ENCODE measurements at regions of chr17 and their contacts with region 1.

Region 1: DNA sequence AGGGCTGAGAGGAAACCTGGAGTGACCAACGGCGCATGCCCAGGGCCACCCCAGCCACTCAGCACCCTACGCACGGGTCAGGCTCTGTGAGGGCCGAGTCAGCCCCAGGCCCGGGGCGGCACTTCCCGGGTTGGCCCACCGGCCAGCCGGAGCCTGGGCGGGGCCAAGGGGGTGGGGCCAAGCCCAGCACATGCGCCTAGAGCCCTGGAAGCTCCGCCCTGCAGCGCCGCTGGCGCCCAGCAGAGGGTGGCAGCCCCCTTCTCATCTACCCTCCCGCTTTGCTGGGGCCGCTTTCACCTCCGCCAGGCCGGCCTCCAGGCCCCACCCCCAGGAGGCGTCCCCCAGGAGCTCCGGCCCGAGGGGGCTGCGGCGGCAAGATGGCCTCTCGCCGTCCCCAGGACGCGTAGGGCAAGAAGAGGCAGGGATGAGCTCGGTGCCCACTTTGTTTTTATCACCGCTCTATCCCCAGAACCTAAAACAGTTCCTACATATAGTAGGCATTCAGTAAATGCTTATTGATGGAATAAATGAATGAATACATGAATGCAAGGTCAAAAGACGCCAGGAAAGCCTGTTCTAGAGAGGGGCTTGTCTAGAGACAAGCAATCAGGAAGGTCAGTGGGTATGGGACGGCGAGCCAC is 31.3 kb downstream of the MYO18A start:
- DNase-seq: no peak
- H3K4me3 ChIP-seq: peak overlapping the region; percentile 36
- H3K27me3 ChIP-seq: no peaks in the 10 kb centered on the region
- CTCF ChIP-seq: peak; percentile 89

Region 2: GRCh38 chr17:29059281-29059680 is 89.6 kb before region 1 on chr17:
- CTCF ChIA-PET with region 1: no interaction called
- POLR2A ChIA-PET with region 1: no interaction called
- DNase-seq: no peak
- H3K4me3 ChIP-seq: no peak overlapping the region
- H3K27me3 ChIP-seq: peaks cover 21% of the 10 kb centered on the region
- CTCF ChIP-seq: no peak

Region 3: DNA sequence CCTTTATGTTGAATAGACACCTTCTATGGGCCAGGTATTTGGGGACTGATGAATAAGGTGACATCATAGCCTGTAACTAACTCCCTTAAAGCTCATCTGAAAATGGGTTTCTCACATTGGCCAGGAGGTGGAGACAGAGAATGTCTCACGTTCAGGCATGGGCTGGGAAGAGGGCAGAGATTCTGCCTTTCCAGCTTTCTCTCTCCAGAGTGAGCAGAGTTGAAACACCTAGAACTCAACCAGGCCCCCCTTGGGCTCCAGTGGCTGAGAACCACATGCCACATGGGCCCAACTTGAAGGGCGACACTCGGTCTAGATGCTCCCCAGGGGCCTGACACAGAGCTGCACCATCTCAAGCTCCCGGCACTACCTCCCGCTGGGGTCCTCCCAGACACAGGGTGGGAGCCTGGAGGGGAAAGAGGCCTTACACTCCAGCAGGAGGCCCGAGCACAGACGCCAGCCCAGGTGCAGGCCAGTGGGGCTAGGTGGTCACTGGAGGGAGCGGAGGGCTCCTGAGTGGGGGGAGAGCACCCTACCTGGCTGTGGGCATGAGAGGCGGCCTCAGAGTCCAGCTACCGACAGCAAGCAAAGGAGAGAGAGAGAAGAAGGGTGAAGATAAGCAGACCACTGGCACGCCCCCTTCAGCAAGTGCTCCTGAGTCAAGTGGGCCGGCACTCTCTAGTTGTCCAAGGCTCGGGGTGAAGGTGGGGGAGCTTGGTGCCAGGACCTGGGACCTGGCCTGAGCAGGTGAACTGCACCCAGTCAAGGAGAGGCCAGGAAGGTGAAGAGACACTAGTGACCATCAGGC is 24.6 kb before region 1 on chr17:
- CTCF ChIA-PET with region 1: interaction called, 315 read pairs
- POLR2A ChIA-PET with region 1: no interaction called
- DNase-seq: no peak
- H3K4me3 ChIP-seq: no peak overlapping the region
- H3K27me3 ChIP-seq: no peaks in the 10 kb centered on the region
- CTCF ChIP-seq: peak; percentile 79

Region 4: GRCh38 chr17:29180034-29180787 is 31.3 kb after region 1 on chr17 and contains the start of gene MYO18A:
- CTCF ChIA-PET with region 1: interaction called, 227 read pairs
- POLR2A ChIA-PET with region 1: no interaction called
- DNase-seq: no peak
- H3K4me3 ChIP-seq: peak within 1 kb of the TSS; percentile 60
- H3K27me3 ChIP-seq: no peaks in the 10 kb centered on the region
- CTCF ChIP-seq: peak; percentile 57
- polyA plus RNA-seq, gene MYO18A: 8.2 and 12.0 TPM in 2 replicates

Region 5: DNA sequence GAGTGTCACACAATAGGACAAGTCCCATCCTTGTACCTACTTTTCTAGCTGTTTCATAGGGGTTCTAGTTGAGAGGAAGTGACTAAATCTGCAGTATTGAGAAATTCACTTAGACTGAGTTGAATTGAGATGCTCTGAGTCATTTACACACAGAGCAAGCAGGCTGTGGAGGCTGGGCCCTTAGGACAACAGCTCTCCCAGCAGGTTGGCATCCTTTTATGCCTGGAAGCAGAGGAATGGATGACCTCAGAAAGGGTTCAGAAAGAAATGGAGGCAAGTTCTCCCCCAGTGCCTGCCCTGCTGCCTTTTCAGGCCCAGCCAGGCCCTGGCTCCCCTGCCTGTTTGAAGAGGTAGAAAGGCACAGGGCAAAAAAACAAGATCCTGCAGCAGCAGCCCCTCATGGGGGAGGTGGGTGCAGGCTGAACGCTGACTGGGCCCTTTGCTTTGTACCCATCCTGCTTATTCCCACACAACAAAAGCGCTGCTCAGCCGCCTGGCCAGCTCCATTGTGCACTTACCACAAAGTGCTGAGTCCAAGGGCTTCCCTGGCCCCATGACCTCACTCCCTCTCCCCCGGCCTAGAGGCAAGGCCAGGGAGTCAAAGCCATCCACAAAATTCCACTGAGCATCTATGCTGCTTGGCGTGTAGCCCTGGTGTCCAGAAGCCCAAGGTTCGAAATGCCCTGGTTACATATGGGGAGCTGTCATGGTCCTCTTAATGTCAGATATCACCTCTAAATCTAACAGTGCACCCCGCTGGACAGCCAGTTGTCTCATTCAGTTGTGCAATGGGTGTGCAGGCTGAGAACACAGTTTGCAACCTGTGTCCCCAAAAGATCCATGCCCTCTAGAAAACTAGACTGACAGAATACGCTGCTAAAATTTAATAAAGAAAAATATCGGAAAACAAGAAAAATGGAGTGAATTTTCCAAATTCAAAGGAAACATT is 92.4 kb after region 1 on chr17:
- CTCF ChIA-PET with region 1: interaction called, 11 read pairs
- POLR2A ChIA-PET with region 1: interaction called, 3 read pairs
- DNase-seq: peak; percentile 90
- H3K4me3 ChIP-seq: no peak overlapping the region
- H3K27me3 ChIP-seq: no peaks in the 10 kb centered on the region
- CTCF ChIP-seq: peak; percentile 24; the same call in 1 of the 2 replicates

Region 6: GRCh38 chr17:29292992-29293889 is 144.3 kb after region 1 on chr17:
- CTCF ChIA-PET with region 1: interaction called, 50 read pairs
- POLR2A ChIA-PET with region 1: interaction called, 6 read pairs
- DNase-seq: no peak
- H3K4me3 ChIP-seq: peak overlapping the region; percentile 79
- H3K27me3 ChIP-seq: no peaks in the 10 kb centered on the region
- CTCF ChIP-seq: no peak

Measured in BJ (cell line).